Head of caudate nucleus (tissue), 42 donors: ENCODE measurements at regions of chr3 and their contacts with region 1.

Region 1: GRCh38 chr3:57094575-57094974 is 34.1 kb downstream of the SPATA12 start:
- DNase-seq: no peak

Region 2: GRCh38 chr3:56976651-56977560 is 117.7 kb before region 1 on chr3:
- intact Hi-C with region 1: no loop called
- DNase-seq: peak in 34 of 42 donors; percentile 25 to 75 (median 61)

Region 3: DNA sequence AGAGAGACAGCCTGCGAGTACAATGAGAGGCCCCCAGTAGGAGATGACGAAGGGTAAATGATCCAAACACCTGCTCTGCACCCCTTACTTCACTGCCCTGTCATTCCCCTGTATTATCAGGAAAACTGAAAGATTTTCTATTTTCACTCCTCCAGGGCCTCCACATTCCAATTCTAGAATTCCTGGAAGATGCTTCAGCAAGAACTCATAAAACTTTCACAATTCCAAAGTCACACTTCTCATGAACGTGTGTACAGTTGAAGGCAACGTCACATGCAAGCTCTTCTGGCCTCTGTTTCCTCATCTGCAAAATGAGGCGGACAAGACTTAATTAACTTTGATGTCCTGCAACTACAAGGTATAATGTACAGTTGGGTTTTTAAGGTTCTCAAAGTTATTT is 96.9 kb before region 1 on chr3:
- intact Hi-C with region 1: loop called (anchors 10 kb)
- DNase-seq: no peak